CD4-positive, alpha-beta memory T cell (primary cell): ENCODE measurements at regions of chr14 and their contacts with region 1.

Region 1: DNA sequence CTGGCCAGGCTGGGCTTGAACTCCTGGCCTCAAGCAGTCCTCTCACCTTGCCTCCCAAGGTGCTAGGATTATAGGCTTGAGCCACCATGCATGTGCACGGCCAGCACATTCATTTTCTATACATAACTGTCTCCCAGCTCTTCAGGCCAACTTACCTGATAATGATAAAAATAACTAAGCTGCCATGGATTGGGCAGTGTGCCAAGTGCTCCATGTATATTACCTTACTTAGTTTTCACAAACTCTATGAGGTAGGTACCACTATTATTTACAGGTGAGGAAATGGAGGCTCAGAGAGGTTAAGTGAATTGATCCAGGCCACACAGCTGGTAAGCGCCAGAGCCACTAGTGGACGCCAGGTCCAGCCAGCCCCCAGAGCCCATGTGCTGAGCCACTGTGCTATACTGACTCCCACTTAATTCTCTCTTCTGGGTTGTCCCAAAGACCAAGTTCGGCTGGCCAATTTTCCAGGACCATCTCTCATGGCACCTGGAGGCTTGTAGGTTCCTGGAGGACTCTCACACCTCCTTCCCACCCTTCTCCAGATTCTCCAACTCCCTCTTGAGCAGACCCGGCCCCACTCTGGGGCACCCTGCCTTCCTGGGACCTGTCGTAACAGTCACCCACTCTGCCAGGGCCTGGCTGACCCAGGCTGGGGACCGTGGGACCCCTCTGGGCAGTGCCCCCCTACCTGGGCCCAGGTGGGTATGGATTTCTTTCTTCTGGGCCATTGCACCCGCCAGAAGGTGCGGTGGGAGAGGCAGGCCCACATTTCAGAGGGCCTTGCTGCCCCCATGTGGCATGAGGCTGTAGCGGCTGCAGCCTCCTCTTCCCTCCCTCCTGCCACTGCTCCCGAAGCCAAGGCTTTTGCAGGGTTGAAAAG is 30.2 kb upstream of the CIPC start:
- DNase-seq: peak in 4 of 5 donors; percentile 45 to 63 (median 58)
- H3K4me3 ChIP-seq: no peak overlapping the region
- H3K4me3 Mint-ChIP-seq: no peak overlapping the region
- H3K27ac ChIP-seq: no peak overlapping the region
- H3K27ac Mint-ChIP-seq: no peak overlapping the region
- H3K4me1 ChIP-seq: no peaks in the 10 kb centered on the region
- H3K4me1 Mint-ChIP-seq: peaks cover 0 to 3% (median under 1%) of the 10 kb centered on the region in 4 donors
- H3K27me3 ChIP-seq: no peaks in the 10 kb centered on the region
- H3K27me3 Mint-ChIP-seq: peaks cover 0 to 4% of the 10 kb centered on the region in 2 donors

Region 2: GRCh38 chr14:76887196-76887595 is 180.7 kb before region 1 on chr14:
- CTCF ChIA-PET with region 1: interaction called, 628 read pairs
- POLR2A ChIA-PET with region 1: no interaction called
- intact Hi-C with region 1: no loop called
- DNase-seq: no peak
- H3K4me3 ChIP-seq: no peak overlapping the region
- H3K4me3 Mint-ChIP-seq: no peak overlapping the region
- H3K27ac ChIP-seq: no peak overlapping the region
- H3K27ac Mint-ChIP-seq: no peak overlapping the region
- H3K4me1 ChIP-seq: no peaks in the 10 kb centered on the region
- H3K4me1 Mint-ChIP-seq: peaks cover 0 to 2% (median 0%) of the 10 kb centered on the region in 4 donors
- H3K27me3 ChIP-seq: no peaks in the 10 kb centered on the region
- H3K27me3 Mint-ChIP-seq: peaks cover 1 to 6% of the 10 kb centered on the region in 2 donors

Region 3: DNA sequence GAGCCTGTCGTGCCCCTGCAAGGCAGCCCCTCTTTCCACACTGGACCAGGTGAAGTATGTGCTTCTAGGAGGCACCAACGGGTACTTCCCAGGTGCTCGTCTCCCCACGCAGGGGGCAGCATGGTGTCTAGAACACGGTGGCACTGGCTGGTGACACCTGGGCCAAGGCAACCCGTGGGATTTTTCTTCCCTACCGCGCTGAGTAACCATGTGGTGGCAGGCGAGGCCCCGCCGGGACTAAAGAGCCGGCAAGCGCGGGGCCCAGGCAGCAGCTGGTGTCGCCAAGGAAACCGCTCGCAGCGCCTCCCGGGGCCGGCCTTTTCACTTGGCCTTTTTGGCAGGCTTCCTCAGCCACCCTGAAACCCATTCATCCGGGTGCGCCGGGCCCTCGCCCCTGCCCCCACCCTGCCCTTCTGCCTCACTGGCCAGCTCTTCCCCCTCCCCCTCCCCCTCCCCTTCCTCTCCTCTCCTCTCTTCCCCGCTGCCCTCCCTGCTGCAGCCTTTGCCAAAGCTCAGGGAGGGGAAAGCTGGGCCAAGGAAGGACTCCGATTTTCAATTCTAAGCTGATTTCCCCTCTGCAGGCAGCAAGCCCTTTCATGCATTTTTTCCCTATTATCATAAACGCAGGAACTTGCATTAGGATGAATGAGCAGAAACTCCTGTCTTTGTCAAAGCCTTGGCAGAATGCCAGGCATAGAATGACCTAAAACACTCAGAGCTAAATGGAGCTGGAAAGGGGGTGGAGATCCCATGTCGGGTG is 120.6 kb before region 1 on chr14:
- CTCF ChIA-PET with region 1: interaction called, 26 read pairs
- POLR2A ChIA-PET with region 1: interaction called, 3 read pairs
- intact Hi-C with region 1: no loop called
- DNase-seq: peak; percentile 68 to 82 (median 72)
- H3K4me3 ChIP-seq: peak overlapping the region in 1 of 2 donors; percentile 19
- H3K4me3 Mint-ChIP-seq: peak overlapping the region in 7 of 8 donors; percentile 4 to 65 (median 57)
- H3K27ac ChIP-seq: peak overlapping the region; percentile 33
- H3K27ac Mint-ChIP-seq: peak overlapping the region; percentile 37 to 93 (median 87)
- H3K4me1 ChIP-seq: peaks cover 20% of the 10 kb centered on the region
- H3K4me1 Mint-ChIP-seq: peaks cover 16 to 39% (median 24%) of the 10 kb centered on the region in 4 donors
- H3K27me3 ChIP-seq: no peaks in the 10 kb centered on the region
- H3K27me3 Mint-ChIP-seq: no peaks in the 10 kb centered on the region

Region 4: DNA sequence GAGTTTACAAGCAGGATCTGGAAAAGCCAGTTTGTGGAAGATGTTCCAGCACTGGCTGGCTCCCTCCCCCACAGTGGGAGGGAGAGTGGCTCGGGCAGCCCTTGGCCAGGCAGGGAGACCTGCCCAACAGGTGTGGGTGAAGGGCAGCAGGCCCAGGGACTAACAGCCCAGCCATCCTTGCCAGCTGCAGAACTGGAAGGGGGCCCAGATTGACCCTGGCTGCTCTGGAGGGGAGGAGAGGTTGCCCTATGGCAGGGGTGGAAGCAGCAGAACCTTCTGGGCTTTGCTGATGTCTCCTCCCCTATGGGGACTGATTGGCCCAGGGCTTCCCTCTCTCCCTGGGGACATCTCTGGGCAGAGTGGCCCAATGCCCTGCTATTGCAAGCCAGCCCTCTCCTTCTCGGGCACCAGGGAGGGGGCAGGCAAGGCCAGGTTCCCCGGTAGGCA is 59.9 kb before region 1 on chr14:
- CTCF ChIA-PET with region 1: no interaction called
- POLR2A ChIA-PET with region 1: no interaction called
- intact Hi-C with region 1: no loop called
- DNase-seq: no peak
- H3K4me3 ChIP-seq: no peak overlapping the region
- H3K4me3 Mint-ChIP-seq: no peak overlapping the region
- H3K27ac ChIP-seq: no peak overlapping the region
- H3K27ac Mint-ChIP-seq: no peak overlapping the region
- H3K4me1 ChIP-seq: peaks cover 15% of the 10 kb centered on the region
- H3K4me1 Mint-ChIP-seq: peaks cover 16 to 25% (median 20%) of the 10 kb centered on the region in 4 donors
- H3K27me3 ChIP-seq: no peaks in the 10 kb centered on the region
- H3K27me3 Mint-ChIP-seq: no peaks in the 10 kb centered on the region

Region 5: DNA sequence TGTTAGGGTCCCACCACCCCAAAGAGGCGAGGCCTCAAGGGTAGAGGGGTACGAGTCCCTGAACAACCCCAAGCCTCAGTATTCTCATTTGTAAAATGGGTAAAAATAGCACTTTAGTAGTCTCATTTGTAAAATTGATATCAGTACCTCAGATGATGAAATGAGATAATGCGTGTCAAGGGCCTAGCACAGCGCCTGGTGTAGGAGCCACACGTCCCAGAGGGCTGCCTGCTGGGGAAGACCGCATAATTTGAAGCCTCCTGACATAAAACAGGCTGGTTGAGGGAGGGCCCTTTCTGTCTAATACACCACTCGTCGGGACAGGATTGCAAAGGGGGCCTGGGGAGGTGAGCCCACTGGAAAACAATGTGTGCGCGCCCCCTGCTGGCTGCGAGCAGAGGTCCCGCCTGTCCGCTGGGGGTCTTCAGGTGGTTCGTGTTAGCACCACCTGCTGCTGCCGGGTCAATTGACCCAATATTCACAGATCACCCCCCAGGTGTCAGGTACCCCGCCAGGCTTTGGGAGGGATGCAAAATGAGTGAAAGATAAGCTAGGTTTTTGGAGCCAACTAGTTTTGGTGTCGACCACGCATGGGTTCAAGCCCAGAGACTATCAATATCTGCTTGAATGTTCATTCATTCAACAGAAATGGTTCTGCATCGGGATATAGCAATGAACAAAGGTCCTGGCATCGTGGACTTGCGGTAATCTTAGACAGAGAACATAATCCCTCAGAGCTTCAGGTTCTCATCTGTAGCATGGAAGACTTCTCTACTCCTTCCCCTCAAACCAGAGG is 14.6 kb before region 1 on chr14:
- CTCF ChIA-PET with region 1: interaction called, 122 read pairs
- POLR2A ChIA-PET with region 1: interaction called, 3 read pairs
- intact Hi-C with region 1: no loop called
- DNase-seq: peak; percentile 68 to 75 (median 69)
- H3K4me3 ChIP-seq: no peak overlapping the region
- H3K4me3 Mint-ChIP-seq: peak overlapping the region in 1 of 8 donors; percentile 51
- H3K27ac ChIP-seq: no peak overlapping the region
- H3K27ac Mint-ChIP-seq: peak overlapping the region in 6 of 7 donors; percentile 24 to 79 (median 49)
- H3K4me1 ChIP-seq: peaks cover 25% of the 10 kb centered on the region
- H3K4me1 Mint-ChIP-seq: peaks cover 16 to 36% (median 22%) of the 10 kb centered on the region in 4 donors
- H3K27me3 ChIP-seq: no peaks in the 10 kb centered on the region
- H3K27me3 Mint-ChIP-seq: no peaks in the 10 kb centered on the region

Region 6: DNA sequence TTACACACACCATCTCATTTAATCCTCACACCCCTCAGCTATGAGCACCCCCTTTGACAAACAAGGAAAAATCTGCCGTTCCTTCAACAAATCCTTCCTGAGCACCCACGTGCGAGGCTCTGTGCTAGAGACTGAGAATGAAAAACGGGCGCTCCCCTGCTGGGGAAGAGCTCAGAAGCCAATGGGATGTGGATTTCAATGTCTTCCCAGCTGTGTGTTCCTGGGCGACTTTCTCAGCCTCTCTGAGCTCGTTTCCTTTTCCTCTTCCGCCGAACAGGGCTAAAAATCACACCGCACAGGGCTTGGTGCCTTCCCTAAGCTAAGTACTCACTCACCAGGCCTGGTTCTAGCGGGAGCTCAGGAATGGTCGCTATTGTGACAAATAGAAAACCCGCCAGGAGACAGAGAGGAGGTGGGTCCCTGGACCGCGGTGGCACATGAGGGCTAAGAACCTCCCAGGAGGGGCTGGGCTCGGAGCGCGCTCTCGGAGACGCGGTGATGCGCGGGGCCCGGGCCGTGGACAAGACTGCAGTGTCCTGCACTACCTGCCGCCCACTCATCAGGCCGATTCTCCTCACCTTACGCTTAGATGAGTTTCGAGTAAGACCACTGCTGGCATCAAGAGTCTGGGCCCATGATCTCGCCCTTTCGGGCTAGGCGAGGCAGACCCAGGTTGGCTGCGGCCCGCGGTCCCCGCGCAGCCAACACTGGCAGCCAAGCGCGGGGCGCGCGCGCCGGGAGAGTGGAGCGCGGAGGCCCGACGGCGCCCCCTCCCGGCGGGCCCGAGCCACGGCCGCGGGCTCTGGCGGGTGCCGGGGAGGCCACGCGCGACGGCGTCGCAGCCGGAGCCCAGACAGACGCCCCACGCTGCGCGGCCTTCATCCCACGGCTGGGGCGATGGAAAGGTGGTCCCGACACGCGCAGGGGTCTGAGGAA is 56.7 kb after region 1 on chr14:
- CTCF ChIA-PET with region 1: interaction called, 70 read pairs
- POLR2A ChIA-PET with region 1: interaction called, 7 read pairs
- intact Hi-C with region 1: loop called (anchors 2 kb)
- DNase-seq: peak; percentile 72 to 83 (median 79)
- H3K4me3 ChIP-seq: peak overlapping the region; percentile 66 to 82
- H3K4me3 Mint-ChIP-seq: peak overlapping the region; percentile 85 to 92 (median 88)
- H3K27ac ChIP-seq: peak overlapping the region; percentile 45
- H3K27ac Mint-ChIP-seq: peak overlapping the region; percentile 50 to 95 (median 91)
- H3K4me1 ChIP-seq: peaks cover 57% of the 10 kb centered on the region
- H3K4me1 Mint-ChIP-seq: peaks cover 17 to 59% (median 45%) of the 10 kb centered on the region in 4 donors
- H3K27me3 ChIP-seq: no peaks in the 10 kb centered on the region
- H3K27me3 Mint-ChIP-seq: peaks cover 6 to 13% of the 10 kb centered on the region in 2 donors